Sciatic nerve (tissue), 2 donors: ENCODE measurements at regions of chr17 and their contacts with region 1.

Region 1: GRCh38 chr17:17694169-17695081 is 13.2 kb downstream of the RAI1 start:
- DNase-seq: peak; percentile 85
- ATAC-seq: peak; percentile 73

Region 2: GRCh38 chr17:17739388-17740066 is 45.1 kb after region 1 on chr17:
- intact Hi-C with region 1: loop called (anchors 2 kb)
- DNase-seq: no peak
- ATAC-seq: peak; percentile 57

Region 3: DNA sequence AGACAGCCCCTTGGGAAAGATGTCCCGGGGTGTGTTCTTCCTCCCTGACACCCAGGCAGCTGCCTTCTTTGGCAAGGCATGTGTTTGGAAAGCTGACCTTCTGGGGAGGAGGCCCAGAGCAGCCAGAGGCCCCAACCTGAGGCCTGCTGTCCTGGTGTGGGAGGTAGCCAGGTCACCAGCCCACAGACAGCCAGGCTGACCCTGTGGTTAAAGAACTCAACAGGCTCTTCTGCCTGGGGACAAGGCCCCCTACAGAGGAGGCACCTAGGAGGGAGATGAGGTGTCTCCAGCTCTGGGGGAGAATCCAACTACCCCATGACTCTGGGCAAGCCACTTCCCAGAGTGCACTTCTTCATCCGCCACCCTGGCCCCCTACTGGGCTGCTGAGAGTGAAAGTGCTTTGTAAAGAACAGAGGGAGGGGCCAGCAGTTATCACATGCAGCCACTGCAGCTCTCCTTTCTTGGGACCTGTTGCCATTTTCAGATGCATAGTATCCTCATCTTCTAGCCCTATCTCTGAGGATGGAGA is 155.5 kb after region 1 on chr17:
- intact Hi-C with region 1: loop called (anchors 5 kb)
- DNase-seq: no peak
- ATAC-seq: peak; percentile 76